ENCODE measurements at regions of chr16 and their contacts with region 1.

Region 1: GRCh38 chr16:66696669-66697630 is at the start of gene CMTM4:
- DNase-seq: peak; percentile 74
- H3K4me3 Mint-ChIP-seq: peak within 1 kb of the TSS; percentile 77
- H3K27ac Mint-ChIP-seq: no peak within 1 kb of the TSS
- H3K4me1 Mint-ChIP-seq: no peaks in the 10 kb centered on the region
- H3K27me3 Mint-ChIP-seq: peaks cover 38% of the 10 kb centered on the region
- total RNA-seq, gene CMTM4: 3.3 and 3.9 TPM in 2 replicates

Region 2: GRCh38 chr16:66740010-66740409 is 43.1 kb after region 1 on chr16:
- intact Hi-C with region 1: loop called (anchors 2 kb)
- DNase-seq: no peak
- H3K4me3 Mint-ChIP-seq: no peak overlapping the region
- H3K27ac Mint-ChIP-seq: no peak overlapping the region
- H3K4me1 Mint-ChIP-seq: peaks cover 21% of the 10 kb centered on the region
- H3K27me3 Mint-ChIP-seq: no peaks in the 10 kb centered on the region